ENCODE measurements at regions of chr20 and their contacts with region 1.

Region 1: DNA sequence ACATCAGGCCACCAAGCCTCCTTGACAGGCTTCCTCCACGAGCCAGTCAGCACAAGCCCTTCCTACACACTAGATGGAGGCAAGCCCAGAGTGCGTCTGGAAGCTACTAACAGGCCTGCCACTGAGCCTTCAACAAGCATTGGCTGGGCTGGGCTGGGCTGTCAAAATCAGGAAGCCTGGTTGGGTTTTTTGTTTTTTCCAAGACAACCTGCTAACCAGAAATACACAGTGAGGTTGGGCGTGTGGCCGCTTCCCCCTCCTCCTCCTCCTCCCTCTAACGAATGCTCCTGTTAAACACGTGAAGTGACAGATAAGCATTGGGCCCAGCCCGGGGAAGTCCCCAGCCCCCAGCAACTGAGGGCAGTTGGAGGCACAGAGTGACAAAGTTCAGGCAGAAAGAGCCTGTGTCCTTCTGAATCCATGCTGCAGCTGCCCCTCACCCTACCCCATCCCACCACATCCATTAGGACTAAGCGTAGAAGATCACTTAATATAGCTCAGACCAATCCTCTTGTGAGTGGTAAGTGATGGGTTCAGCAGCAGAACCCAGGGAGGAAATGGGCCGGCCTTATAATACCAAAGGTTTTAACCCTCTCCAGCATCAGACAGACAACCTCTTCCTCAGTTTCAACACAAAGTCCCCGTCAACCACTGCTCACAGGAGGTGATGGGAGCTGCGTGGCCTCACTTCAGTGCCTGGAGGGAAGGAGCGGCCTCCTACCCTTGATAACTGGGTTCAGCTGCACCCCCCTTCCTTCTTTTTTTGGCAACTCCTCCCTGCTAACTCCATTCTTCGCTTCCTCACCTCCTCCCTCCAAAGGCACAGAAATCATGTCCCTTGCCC is 1.1 kb downstream of the NFATC2 start:
- DNase-seq: peak; percentile 96
- H3K4me3 Mint-ChIP-seq: peak overlapping the region; percentile 95
- H3K27ac Mint-ChIP-seq: peak overlapping the region; percentile 100
- H3K4me1 Mint-ChIP-seq: peaks cover 49% of the 10 kb centered on the region
- H3K27me3 Mint-ChIP-seq: peaks cover 15% of the 10 kb centered on the region

Region 2: GRCh38 chr20:51385646-51386530 is 155.5 kb before region 1 on chr20:
- intact Hi-C with region 1: loop called (anchors 1 kb)
- DNase-seq: peak; percentile 77
- H3K4me3 Mint-ChIP-seq: no peak overlapping the region
- H3K27ac Mint-ChIP-seq: peak overlapping the region; percentile 81
- H3K4me1 Mint-ChIP-seq: peaks cover 67% of the 10 kb centered on the region
- H3K27me3 Mint-ChIP-seq: no peaks in the 10 kb centered on the region

Region 3: GRCh38 chr20:51469578-51470498 is 71.6 kb before region 1 on chr20:
- intact Hi-C with region 1: loop called (anchors 1 kb)
- DNase-seq: no peak
- H3K4me3 Mint-ChIP-seq: peak overlapping the region; percentile 63
- H3K27ac Mint-ChIP-seq: peak overlapping the region; percentile 82
- H3K4me1 Mint-ChIP-seq: peaks cover 51% of the 10 kb centered on the region
- H3K27me3 Mint-ChIP-seq: no peaks in the 10 kb centered on the region

Region 4: GRCh38 chr20:51500311-51500710 is 41.1 kb before region 1 on chr20:
- intact Hi-C with region 1: loop called (anchors 1 kb)
- DNase-seq: peak; percentile 85
- H3K4me3 Mint-ChIP-seq: peak overlapping the region; percentile 27
- H3K27ac Mint-ChIP-seq: peak overlapping the region; percentile 85
- H3K4me1 Mint-ChIP-seq: peaks cover 72% of the 10 kb centered on the region
- H3K27me3 Mint-ChIP-seq: no peaks in the 10 kb centered on the region

Region 5: GRCh38 chr20:51525241-51526129 is 15.9 kb before region 1 on chr20:
- intact Hi-C with region 1: loop called (anchors 2 kb)
- DNase-seq: peak; percentile 80
- H3K4me3 Mint-ChIP-seq: peak overlapping the region; percentile 82
- H3K27ac Mint-ChIP-seq: peak overlapping the region; percentile 94
- H3K4me1 Mint-ChIP-seq: peaks cover 57% of the 10 kb centered on the region
- H3K27me3 Mint-ChIP-seq: no peaks in the 10 kb centered on the region

Region 6: GRCh38 chr20:51562332-51563155 is 21.1 kb after region 1 on chr20:
- intact Hi-C with region 1: loop called (anchors 2 kb)
- DNase-seq: peak; percentile 68
- H3K4me3 Mint-ChIP-seq: peak overlapping the region; percentile 77
- H3K27ac Mint-ChIP-seq: no peak overlapping the region
- H3K4me1 Mint-ChIP-seq: peaks cover 21% of the 10 kb centered on the region
- H3K27me3 Mint-ChIP-seq: peaks cover 58% of the 10 kb centered on the region

Region 7: DNA sequence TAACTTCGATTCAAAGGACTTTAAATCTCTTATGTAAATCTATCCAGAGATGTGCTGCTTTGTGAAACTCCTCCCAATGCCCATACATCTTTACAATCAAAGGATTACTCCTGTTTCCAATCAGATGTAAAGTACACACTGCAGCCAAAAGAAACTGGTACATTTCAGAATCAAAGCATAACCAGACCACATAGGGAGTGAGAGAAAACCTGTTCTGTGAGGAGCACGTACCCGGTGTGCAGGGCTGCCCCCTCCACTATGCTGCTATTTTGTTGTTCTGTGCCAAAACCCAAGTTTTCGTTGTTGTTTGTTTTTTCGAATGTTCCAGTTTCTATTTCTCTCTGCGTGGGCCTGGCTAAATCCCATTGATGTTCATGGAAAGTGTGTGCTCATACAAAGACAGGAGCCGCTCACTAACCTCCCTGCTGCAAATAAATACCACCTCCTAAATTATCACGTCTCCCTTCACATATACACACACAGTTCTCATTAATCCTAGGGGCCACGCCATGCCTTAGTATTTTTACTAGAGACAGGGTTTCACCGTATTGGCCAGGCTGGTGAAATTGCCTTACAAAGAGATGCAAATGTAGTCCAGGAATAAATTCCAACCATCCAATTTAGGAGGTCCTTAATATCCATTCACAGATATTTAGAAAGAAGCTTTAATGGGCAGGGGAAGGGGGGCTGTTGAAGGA is 173.9 kb after region 1 on chr20:
- intact Hi-C with region 1: loop called (anchors 5 kb)
- DNase-seq: no peak
- H3K4me3 Mint-ChIP-seq: peak overlapping the region; percentile 60
- H3K27ac Mint-ChIP-seq: peak overlapping the region; percentile 74
- H3K4me1 Mint-ChIP-seq: peaks cover 19% of the 10 kb centered on the region
- H3K27me3 Mint-ChIP-seq: peaks cover 2% of the 10 kb centered on the region

Region 8: GRCh38 chr20:52031563-52032303 is 490.3 kb after region 1 on chr20:
- intact Hi-C with region 1: no loop called
- DNase-seq: peak; percentile 80
- H3K4me3 Mint-ChIP-seq: peak overlapping the region; percentile 25
- H3K27ac Mint-ChIP-seq: peak overlapping the region; percentile 85
- H3K4me1 Mint-ChIP-seq: peaks cover 22% of the 10 kb centered on the region
- H3K27me3 Mint-ChIP-seq: no peaks in the 10 kb centered on the region

Measured in activated CD4-positive, alpha-beta T cell treated with anti-CD3 and anti-CD28 coated beads, Interleukin-2, amount 10 ng/mL, durations not matched to agents 24 days and 14 days (primary cell).